ENCODE measurements at regions of chr13 and their contacts with region 1.

Region 1: GRCh38 chr13:85651440-85651839 is 147.8 kb downstream of the SLITRK6 start:
- DNase-seq: no peak
- ATAC-seq: peak; percentile 77
- H3K4me3 ChIP-seq: no peak overlapping the region
- H3K27ac ChIP-seq: no peak overlapping the region
- H3K4me1 ChIP-seq: no peaks in the 10 kb centered on the region
- H3K27me3 ChIP-seq: no peaks in the 10 kb centered on the region
- CTCF ChIP-seq: no peak
- EP300 ChIP-seq: no peak
- POLR2A ChIP-seq: no peak
- RAD21 ChIP-seq: no peak

Region 2: DNA sequence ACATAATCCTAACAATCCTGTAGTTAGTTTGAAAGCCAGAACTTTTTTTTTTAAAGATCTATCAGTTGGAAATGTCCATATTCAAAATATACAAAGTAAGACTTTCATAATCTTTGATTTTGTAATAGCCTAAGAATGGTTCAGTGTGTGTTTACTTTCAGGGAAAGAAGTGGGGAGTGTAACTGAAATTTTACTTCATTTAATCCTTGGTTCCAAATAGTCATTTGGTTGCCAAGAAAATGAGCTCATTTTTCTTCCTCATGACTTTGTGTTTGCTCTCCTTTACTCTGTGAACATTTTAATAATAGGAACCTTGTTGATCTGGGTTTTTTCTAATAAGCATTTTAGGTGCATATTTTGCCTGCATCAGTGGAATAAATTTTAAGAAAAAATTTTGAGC is 131.0 kb before region 1 on chr13:
- CTCF ChIA-PET with region 1: no interaction called
- POLR2A ChIA-PET with region 1: no interaction called
- RAD21 ChIA-PET with region 1: no interaction called
- SMC1A ChIA-PET with region 1: no interaction called
- in situ Hi-C with region 1: no loop called
- intact Hi-C with region 1: no loop called
- DNase-seq: no peak
- ATAC-seq: no peak
- H3K4me3 ChIP-seq: no peak overlapping the region
- H3K27ac ChIP-seq: no peak overlapping the region
- H3K4me1 ChIP-seq: no peaks in the 10 kb centered on the region
- H3K27me3 ChIP-seq: no peaks in the 10 kb centered on the region
- CTCF ChIP-seq: no peak
- EP300 ChIP-seq: no peak
- POLR2A ChIP-seq: no peak
- RAD21 ChIP-seq: no peak

Region 3: GRCh38 chr13:85665286-85665685 is 13.8 kb after region 1 on chr13:
- CTCF ChIA-PET with region 1: no interaction called
- POLR2A ChIA-PET with region 1: interaction called, 3 read pairs
- RAD21 ChIA-PET with region 1: interaction called, 8 read pairs
- SMC1A ChIA-PET with region 1: interaction called, 37 read pairs
- in situ Hi-C with region 1: no loop called
- intact Hi-C with region 1: no loop called
- DNase-seq: no peak
- ATAC-seq: peak; percentile 57
- H3K4me3 ChIP-seq: no peak overlapping the region
- H3K27ac ChIP-seq: no peak overlapping the region
- H3K4me1 ChIP-seq: no peaks in the 10 kb centered on the region
- H3K27me3 ChIP-seq: no peaks in the 10 kb centered on the region
- CTCF ChIP-seq: no peak
- EP300 ChIP-seq: no peak
- POLR2A ChIP-seq: no peak
- RAD21 ChIP-seq: no peak

Measured in GM12878 (cell line).